Dorsolateral prefrontal cortex (tissue), 120 donors: ENCODE measurements at regions of chr19 and their contacts with region 1.

Region 1: GRCh38 chr19:38899447-38900219 is at the starts of genes NFKBIB and SIRT2:
- DNase-seq: peak; percentile 99 to 100 (median 100)
- H3K4me3 ChIP-seq: peak within 1 kb of the TSS; percentile 77 to 100 (median 96)
- H3K27ac ChIP-seq: peak within 1 kb of the TSS; percentile 83 to 100 (median 97)
- H3K27me3 ChIP-seq: no peaks in the 10 kb centered on the region
- CTCF ChIP-seq: peak in 47 of 56 donors; percentile 9 to 65 (median 36)
- total RNA-seq, gene NFKBIB: 15.4 to 37.9 (median 22.5) TPM
- total RNA-seq, gene SIRT2: 113 to 397 (median 166) TPM

Region 2: DNA sequence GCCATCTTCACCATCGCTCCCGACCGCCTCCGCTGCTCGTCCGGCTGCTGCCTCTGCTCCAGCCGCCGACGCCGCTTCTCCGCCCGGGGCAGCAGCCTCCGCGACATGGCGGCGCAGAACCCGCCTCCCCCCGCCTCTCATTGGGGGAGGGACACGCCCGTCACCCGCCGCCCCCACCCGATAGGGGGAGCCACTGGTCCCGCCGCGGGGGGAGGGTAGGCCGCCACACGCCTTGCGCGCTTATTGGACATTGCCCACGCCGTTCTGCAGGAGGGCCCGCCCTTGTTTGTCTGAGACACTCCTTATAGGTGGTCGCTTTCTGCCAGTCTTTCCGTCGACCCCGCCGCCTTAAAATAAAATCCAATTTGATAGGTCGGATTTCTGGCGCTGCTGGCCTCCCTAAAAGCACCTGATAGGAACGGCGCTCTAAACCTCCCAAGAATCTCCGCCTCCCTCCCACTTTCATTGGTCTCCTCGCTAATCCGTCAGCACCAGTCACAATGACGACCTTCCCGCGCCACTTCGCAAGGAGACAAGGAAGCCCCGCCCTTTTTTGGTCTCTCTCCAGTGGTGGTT is 49.7 kb before region 1 on chr19 and contains the start of gene HNRNPL:
- intact Hi-C with region 1: loop called (anchors 1 to 2 kb)
- DNase-seq: peak in 8 of 10 donors; percentile 98 to 100 (median 100)
- H3K4me3 ChIP-seq: peak within 1 kb of the TSS; percentile 65 to 100 (median 92)
- H3K27ac ChIP-seq: peak within 1 kb of the TSS; percentile 97 to 100 (median 100)
- H3K27me3 ChIP-seq: no peaks in the 10 kb centered on the region
- CTCF ChIP-seq: peak in 54 of 56 donors; percentile 27 to 73 (median 50)
- total RNA-seq, gene HNRNPL: 179 to 311 (median 224) TPM